Posterior cingulate gyrus (tissue), 11 donors: ENCODE measurements at regions of chr4 and their contacts with region 1.

Region 1: GRCh38 chr4:121370729-121371325 is 10.0 kb downstream of the QRFPR start:
- DNase-seq: peak in 3 of 10 donors; percentile 19 to 44 (median 30)

Region 2: DNA sequence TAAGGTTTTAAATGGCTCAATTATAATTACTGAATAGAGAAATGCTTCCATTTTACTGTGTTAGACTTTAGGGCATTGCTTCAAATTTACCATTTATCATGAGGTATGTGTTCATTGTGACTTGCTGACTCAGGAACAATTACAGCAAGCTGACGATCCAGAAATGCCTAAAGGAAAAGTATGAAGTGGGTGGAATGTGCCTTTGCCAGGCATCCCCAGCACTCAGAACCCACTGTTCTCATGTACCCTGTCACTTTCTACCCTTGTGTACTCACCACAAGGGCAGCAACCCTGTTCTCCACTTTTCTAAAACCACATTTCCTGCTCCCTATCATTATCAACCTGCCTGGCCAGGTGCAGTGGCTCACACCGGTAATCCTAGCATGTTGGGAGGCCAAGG is 31.5 kb before region 1 on chr4:
- intact Hi-C with region 1: no loop called
- DNase-seq: no peak

Region 3: DNA sequence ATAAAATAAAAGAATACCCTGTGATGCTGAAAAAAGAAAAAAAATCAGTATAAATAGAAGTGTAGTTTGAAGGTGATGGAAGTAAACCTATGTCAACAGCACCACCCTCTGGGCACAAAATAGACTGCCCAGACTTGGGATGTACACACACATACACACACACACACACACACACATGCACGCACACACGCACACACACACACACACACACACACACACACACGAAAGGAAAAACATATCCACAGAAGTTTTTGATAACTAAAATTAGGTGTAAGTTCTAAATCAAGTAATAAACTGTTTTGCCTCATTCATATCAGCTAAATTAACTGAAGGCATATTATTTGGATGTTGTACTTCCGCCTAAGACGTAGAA is 285.4 kb after region 1 on chr4:
- intact Hi-C with region 1: loop called (anchors 1 kb)
- DNase-seq: peak in 6 of 10 donors; percentile 31 to 74 (median 38)

Region 4: DNA sequence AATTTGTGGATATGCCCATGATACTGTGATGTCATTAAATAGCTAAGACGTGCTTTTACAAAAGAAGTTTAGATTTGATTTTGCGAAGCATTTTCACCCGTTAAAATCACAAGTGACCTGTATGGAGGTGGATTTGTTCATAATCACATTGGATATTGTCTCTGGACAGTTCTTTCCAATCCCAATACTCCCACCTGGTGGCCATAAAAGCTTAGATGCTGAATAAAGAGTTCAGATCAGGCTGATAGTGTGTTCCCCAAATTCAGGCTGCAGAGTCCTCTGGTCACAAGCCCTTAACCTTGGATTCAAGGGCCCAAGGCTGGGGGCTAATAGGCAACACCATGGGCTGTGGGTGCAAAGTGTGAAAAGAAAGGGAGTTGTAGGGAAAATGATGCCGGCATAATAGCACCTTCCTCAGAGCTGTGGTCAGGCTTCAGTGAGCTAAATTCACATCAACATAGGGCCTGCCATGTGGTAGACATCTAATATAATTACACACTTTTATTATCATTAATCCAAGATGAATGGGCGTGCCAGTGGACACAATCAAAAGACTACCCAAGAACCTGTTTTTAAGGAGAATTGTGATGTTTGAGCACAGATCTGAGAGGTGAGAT is 366.0 kb after region 1 on chr4:
- intact Hi-C with region 1: loop called (anchors 10 kb)
- DNase-seq: no peak